Adrenal gland (tissue), 19 donors: ENCODE measurements at regions of chr22 and their contacts with region 1.

Region 1: GRCh38 chr22:29205594-29206371 is at the start of gene EMID1:
- DNase-seq: peak in 4 of 7 donors; percentile 46 to 62 (median 58)
- H3K4me3 ChIP-seq: peak within 1 kb of the TSS in 3 of 4 donors; percentile 27 to 90 (median 56)
- H3K27ac ChIP-seq: peak within 1 kb of the TSS in 2 of 5 donors; percentile 17 to 70
- H3K4me1 ChIP-seq: peaks cover 3 to 26% of the 10 kb centered on the region in 2 donors
- H3K27me3 ChIP-seq: no peaks in the 10 kb centered on the region
- CTCF ChIP-seq: peak in 2 of 6 experiments; percentile 13 to 34
- POLR2A ChIP-seq: no peak
- total RNA-seq, gene EMID1: 12.7 to 70.9 (median 42.8) TPM

Region 2: DNA sequence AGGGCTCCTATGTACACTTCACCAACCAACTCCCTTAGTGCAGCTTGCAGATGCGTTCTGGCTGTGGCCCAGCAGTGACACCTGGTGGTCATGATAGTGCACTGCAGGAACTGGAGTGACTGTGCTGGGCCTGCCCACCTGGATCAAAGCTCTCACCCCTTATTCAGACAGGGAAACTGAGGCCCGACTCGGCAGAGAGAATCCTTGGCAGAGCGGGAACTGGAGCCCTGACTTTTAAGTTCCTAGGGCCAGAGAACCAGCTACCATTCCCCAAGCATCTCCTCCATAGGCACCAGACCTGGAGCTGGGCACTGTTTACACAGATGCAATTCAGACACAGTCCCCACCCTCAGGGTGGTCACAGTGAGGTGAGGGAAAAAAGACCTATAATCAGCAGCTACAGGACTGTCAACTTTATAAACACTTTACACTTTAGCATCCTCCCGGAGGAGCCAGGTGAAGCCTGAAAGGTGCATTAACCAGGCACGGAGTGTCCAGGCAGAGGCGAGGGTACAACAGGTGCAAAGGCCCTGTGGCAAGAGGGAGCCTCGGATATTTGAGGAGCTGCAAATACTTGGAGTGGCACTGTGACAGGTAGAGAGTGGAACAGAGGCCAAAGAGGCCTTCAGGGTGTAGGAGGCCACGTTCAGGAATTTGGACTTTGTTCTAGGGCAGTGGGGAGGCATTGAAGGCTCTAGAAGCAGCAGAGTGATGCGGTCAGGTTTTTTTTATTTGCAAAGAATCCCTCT is 40.0 kb after region 1 on chr22:
- intact Hi-C with region 1: loop called in 1 of 2 experiments (anchors 5 kb)
- DNase-seq: peak; percentile 66 to 92 (median 78)
- H3K4me3 ChIP-seq: no peak overlapping the region
- H3K27ac ChIP-seq: no peak overlapping the region
- H3K4me1 ChIP-seq: no peaks in the 10 kb centered on the region
- H3K27me3 ChIP-seq: no peaks in the 10 kb centered on the region
- CTCF ChIP-seq: peak; percentile 93 to 98 (median 96)
- POLR2A ChIP-seq: no peak